ENCODE measurements at regions of chr1 and their contacts with region 1.

Region 1: DNA sequence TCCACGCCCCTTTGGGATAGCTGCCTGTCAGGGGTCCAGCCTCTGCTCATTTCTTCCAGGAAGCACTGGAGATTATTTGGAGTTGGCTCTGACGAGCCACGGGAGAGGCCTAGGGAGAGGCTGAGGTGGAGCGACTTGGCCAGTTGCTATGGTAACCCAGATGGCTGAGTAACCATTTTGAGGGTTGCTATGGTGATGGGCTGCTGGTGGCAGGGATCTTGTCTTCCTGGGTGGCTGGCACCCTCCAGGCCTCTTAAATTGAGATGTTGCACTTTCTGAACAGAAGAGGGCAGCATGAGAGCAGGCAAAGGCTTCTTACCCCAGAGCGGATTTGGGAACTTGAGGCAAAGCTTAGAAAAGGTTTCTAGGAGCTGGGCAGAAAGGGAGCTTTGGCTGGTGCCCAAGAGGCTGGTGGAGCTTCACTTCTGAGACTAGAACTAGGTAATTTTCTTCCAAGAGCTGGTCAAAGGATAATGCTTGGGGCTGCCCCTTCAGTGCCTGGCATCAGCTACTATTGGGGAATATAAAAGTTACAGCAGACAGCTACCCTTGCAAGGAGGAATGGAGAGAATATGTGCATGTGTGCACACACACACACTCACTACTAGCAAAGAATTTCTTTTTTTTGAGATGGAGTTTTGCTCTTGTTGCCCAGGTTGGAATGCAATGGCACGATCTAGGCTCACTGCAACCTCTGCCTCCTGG is 72.5 kb downstream of the NDUFS5 start:
- H3K4me3 Mint-ChIP-seq: no peak overlapping the region
- H3K27ac Mint-ChIP-seq: no peak overlapping the region
- H3K4me1 Mint-ChIP-seq: peaks cover 44% of the 10 kb centered on the region
- H3K27me3 Mint-ChIP-seq: no peaks in the 10 kb centered on the region

Region 2: GRCh38 chr1:39116868-39117728 is 18.4 kb after region 1 on chr1:
- intact Hi-C with region 1: no loop called
- H3K4me3 Mint-ChIP-seq: no peak overlapping the region
- H3K27ac Mint-ChIP-seq: no peak overlapping the region
- H3K4me1 Mint-ChIP-seq: peaks cover 18% of the 10 kb centered on the region
- H3K27me3 Mint-ChIP-seq: peaks cover 2% of the 10 kb centered on the region

Region 3: GRCh38 chr1:39196244-39197215 is 97.8 kb after region 1 on chr1:
- intact Hi-C with region 1: loop called (anchors 1 kb)
- H3K4me3 Mint-ChIP-seq: no peak overlapping the region
- H3K27ac Mint-ChIP-seq: no peak overlapping the region
- H3K4me1 Mint-ChIP-seq: peaks cover 54% of the 10 kb centered on the region
- H3K27me3 Mint-ChIP-seq: no peaks in the 10 kb centered on the region

Region 4: GRCh38 chr1:39258146-39258924 is 159.6 kb after region 1 on chr1:
- intact Hi-C with region 1: loop called (anchors 1 kb)
- H3K4me3 Mint-ChIP-seq: no peak overlapping the region
- H3K27ac Mint-ChIP-seq: no peak overlapping the region
- H3K4me1 Mint-ChIP-seq: no peaks in the 10 kb centered on the region
- H3K27me3 Mint-ChIP-seq: no peaks in the 10 kb centered on the region

Region 5: GRCh38 chr1:39408641-39409054 is 309.9 kb after region 1 on chr1:
- intact Hi-C with region 1: loop called (anchors 10 kb)
- H3K4me3 Mint-ChIP-seq: peak overlapping the region; percentile 84
- H3K27ac Mint-ChIP-seq: peak overlapping the region; percentile 78
- H3K4me1 Mint-ChIP-seq: peaks cover 59% of the 10 kb centered on the region
- H3K27me3 Mint-ChIP-seq: no peaks in the 10 kb centered on the region

Measured in dendritic cell treated with granulocyte-macrophage colony-stimulating factor and Interleukin-4, amounts not matched to agents 40 ng/mL and 50 ng/mL, for 4 days (primary cell).